Calu3 (cell line): ENCODE measurements at regions of chr7 and their contacts with region 1.

Region 1: DNA sequence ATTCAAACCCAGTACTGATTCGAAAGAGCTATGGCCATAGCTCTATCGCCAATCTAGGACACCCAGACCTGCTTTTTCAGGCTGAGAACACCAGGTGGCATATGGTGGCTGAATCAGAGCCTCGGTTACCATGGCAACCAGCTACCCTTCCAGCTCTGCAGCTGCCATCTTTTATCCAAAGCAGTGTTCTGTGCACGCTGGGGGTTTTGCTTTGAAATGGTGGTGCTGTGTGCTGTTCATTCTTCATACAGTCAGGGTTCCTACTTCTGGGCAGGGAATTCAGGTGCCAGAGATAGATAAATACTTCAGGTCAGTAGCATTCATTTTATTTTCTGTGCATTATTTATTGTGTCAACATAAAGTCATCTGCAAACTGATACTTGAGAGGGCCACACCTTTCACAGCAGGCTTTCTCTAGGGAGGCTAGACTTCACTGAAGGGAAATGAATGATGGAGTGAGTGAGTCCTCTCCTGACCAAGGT is 85.4 kb downstream of the AKR1D1 start:
- DNase-seq: peak; percentile 85
- H3K4me3 Mint-ChIP-seq: no peak overlapping the region
- H3K27ac Mint-ChIP-seq: no peak overlapping the region
- H3K4me1 Mint-ChIP-seq: no peaks in the 10 kb centered on the region
- H3K27me3 Mint-ChIP-seq: no peaks in the 10 kb centered on the region
- CTCF ChIP-seq: peak; percentile 71

Region 2: GRCh38 chr7:138396251-138397070 is 234.8 kb after region 1 on chr7:
- CTCF ChIA-PET with region 1: no interaction called
- intact Hi-C with region 1: loop called (anchors 5 kb)
- DNase-seq: peak; percentile 81
- H3K4me3 Mint-ChIP-seq: peak overlapping the region; percentile 23
- H3K27ac Mint-ChIP-seq: peak overlapping the region; percentile 77
- H3K4me1 Mint-ChIP-seq: peaks cover 18% of the 10 kb centered on the region
- H3K27me3 Mint-ChIP-seq: no peaks in the 10 kb centered on the region
- CTCF ChIP-seq: no peak

Region 3: GRCh38 chr7:138468244-138469123 is 306.8 kb after region 1 on chr7:
- CTCF ChIA-PET with region 1: no interaction called
- intact Hi-C with region 1: loop called (anchors 5 kb)
- DNase-seq: no peak
- H3K4me3 Mint-ChIP-seq: no peak overlapping the region
- H3K27ac Mint-ChIP-seq: no peak overlapping the region
- H3K4me1 Mint-ChIP-seq: peaks cover 41% of the 10 kb centered on the region
- H3K27me3 Mint-ChIP-seq: no peaks in the 10 kb centered on the region
- CTCF ChIP-seq: no peak